ENCODE measurements at regions of chr7 and their contacts with region 1.

Region 1: GRCh38 chr7:2336626-2337299 is 17.9 kb upstream of the EIF3B start:
- DNase-seq: no peak
- ATAC-seq: no peak
- H3K4me3 ChIP-seq: no peak overlapping the region
- H3K27ac ChIP-seq: no peak overlapping the region
- H3K4me1 ChIP-seq: no peaks in the 10 kb centered on the region
- H3K27me3 ChIP-seq: no peaks in the 10 kb centered on the region
- CTCF ChIP-seq: no peak
- POLR2A ChIP-seq: no peak

Region 2: DNA sequence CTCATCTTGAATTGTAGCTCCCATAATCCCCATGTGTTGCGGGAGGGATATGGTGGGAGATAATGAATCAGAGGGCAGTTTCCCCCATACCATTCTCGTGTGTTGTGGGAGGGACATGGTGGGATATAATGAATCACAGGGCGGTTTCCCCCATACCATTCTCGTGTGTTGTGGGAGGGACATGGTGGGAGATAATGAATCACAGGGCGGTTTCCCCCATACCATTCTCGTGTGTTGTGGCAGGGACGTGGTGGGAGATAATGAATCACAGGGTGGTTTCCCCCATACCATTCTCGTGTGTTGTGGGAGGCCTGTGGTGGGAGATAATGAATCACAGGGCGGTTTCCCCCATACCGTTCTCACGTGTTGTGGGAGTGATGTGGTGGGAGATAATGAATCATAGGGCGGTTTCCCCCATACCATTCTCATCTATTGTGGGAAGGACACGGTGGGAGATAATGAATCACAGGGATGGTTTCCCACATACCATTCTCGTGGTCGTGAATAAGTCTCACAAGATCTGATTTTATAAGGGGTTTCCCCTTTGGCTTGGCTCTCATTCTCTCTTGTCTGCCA is 375.0 kb before region 1 on chr7:
- intact Hi-C with region 1: loop called in 1 of 10 experiments (anchors 10 kb)
- DNase-seq: peak in 1 of 5 donors; percentile 7
- ATAC-seq: no peak
- H3K4me3 ChIP-seq: no peak overlapping the region
- H3K27ac ChIP-seq: no peak overlapping the region
- H3K4me1 ChIP-seq: peaks cover 0 to 9% (median 0%) of the 10 kb centered on the region in 12 donors
- H3K27me3 ChIP-seq: no peaks in the 10 kb centered on the region
- CTCF ChIP-seq: no peak
- POLR2A ChIP-seq: no peak

Region 3: GRCh38 chr7:2299131-2299829 is 37.5 kb before region 1 on chr7:
- intact Hi-C with region 1: no loop called
- DNase-seq: peak in 2 of 5 donors; percentile 30 to 49
- ATAC-seq: peak; percentile 37 to 92 (median 64)
- H3K4me3 ChIP-seq: no peak overlapping the region
- H3K27ac ChIP-seq: peak overlapping the region in 7 of 12 donors; percentile 30 to 66 (median 57)
- H3K4me1 ChIP-seq: peaks cover 0 to 29% (median 3%) of the 10 kb centered on the region in 12 donors
- H3K27me3 ChIP-seq: no peaks in the 10 kb centered on the region
- CTCF ChIP-seq: no peak
- POLR2A ChIP-seq: no peak

Region 4: GRCh38 chr7:2373124-2373556 is 36.4 kb after region 1 on chr7:
- intact Hi-C with region 1: no loop called
- DNase-seq: no peak
- ATAC-seq: peak in 3 of 4 donors; percentile 34 to 46 (median 39)
- H3K4me3 ChIP-seq: no peak overlapping the region
- H3K27ac ChIP-seq: no peak overlapping the region
- H3K4me1 ChIP-seq: no peaks in the 10 kb centered on the region
- H3K27me3 ChIP-seq: no peaks in the 10 kb centered on the region
- CTCF ChIP-seq: no peak
- POLR2A ChIP-seq: no peak

Measured in heart left ventricle (tissue), 16 donors.